Heart right ventricle (tissue), 16 donors: ENCODE measurements at regions of chr6 and their contacts with region 1.

Region 1: DNA sequence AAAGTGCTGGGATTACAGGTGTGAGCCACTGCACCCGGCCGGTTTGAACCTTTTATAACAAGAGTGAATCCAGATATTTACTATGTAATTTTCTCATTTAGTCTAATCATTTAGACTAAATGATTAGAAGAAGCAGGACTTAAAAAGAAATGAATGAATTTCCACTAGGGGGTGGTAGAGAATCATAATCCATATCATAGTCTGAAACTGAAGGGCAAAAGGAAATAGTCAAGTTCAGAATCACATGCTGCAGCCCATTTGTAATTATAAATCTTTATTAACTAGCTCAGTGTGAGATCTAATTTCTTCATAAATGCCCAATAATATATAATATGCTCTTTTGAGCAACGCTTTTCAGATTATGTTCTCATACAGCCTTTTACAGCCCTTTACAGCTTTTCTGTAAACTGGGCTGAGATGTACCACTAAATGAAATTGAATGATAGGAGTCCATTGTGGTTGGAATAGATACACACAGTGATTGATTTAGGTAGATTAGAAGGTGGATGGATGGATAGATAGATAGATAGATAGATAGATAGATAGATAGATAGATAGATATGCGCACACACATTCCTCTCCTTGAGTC is 31.8 kb downstream of the PSMB9 start:
- DNase-seq: no peak
- ATAC-seq: peak in 6 of 8 donors; percentile 31 to 76 (median 66)
- H3K4me3 ChIP-seq: no peak overlapping the region
- H3K27ac ChIP-seq: no peak overlapping the region
- H3K4me1 ChIP-seq: peaks cover 0 to 27% (median 0%) of the 10 kb centered on the region in 9 donors
- H3K27me3 ChIP-seq: no peaks in the 10 kb centered on the region
- CTCF ChIP-seq: peak; percentile 50 to 81 (median 68)

Region 2: DNA sequence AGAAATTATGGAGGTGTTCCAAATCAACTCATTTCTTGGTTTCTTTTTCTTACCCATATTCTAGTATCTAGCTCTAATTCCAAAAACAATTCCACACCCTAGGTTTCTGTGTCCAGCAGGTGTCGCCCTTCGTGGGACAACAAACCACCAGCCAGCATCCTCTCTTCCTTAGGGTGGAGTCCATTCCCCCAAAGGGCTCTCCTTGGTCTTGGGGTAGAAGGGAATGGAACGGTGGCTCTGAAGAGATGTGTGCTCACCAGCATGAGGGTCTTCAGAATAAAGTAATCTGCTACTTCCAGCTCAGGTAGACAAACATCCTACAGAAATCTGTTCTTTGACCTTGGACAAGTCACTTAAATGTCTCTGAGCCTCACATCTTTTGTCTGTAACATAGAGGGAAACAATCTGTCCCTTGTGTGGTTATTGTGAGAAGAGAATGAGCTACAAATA is 47.9 kb after region 1 on chr6:
- intact Hi-C with region 1: loop called in 8 of 10 experiments (anchors 2 to 10 kb)
- DNase-seq: peak; percentile 72 to 83
- ATAC-seq: peak; percentile 50 to 77 (median 68)
- H3K4me3 ChIP-seq: no peak overlapping the region
- H3K27ac ChIP-seq: peak overlapping the region in 1 of 10 donors; percentile 5
- H3K4me1 ChIP-seq: peaks cover 0 to 46% (median 0%) of the 10 kb centered on the region in 9 donors
- H3K27me3 ChIP-seq: no peaks in the 10 kb centered on the region
- CTCF ChIP-seq: peak; percentile 72 to 92 (median 82)

Region 3: DNA sequence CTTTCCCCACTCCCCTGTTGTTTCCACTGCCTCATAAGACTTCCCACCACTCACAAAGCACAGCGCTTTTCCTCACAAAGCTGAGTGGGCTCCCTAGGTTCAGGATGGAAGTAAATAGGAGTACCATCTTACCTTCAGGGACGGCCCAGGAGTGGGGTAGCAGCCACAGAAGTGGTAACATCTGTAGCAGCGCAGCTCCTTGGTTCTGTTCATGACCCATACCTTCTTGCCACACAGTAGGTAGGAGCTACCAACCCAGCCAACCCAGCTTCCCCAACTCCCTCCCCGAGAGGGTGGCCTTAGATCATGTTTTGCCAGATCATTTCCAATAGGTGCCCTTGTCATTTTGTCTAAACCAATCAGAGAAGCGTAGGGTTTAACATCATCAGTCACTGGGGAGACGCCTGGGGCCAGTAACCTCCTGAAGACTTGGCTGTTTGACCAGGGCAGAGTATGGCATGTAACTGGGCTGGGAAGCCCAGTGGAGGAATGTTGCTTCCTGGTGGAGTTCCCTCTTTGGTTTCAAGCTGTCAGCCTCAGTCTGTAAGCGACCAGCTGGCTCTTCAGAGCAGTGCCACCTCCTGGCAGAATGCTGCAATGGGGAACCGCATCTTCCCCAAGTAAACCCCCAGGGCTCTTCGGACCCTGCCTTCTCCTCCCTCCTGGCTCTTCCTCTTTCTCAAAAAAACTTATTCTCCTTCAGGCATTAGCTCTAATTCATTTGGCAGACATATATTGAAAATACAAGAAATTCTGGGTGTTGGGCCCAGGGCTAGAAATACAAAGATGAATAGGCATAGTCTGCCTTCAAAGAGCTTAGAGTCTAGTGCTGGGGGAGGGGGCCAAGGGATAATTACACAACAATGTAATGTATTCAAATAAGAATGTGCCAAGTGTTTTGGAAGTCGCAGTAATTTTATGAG is 67.3 kb after region 1 on chr6 and contains the start of gene HLA-DMA:
- intact Hi-C with region 1: loop called in 1 of 10 experiments (anchors 5 kb)
- DNase-seq: peak; percentile 70 to 92
- ATAC-seq: peak; percentile 98 to 100 (median 99)
- H3K4me3 ChIP-seq: peak within 1 kb of the TSS in 9 of 10 donors; percentile 19 to 55 (median 44)
- H3K27ac ChIP-seq: peak within 1 kb of the TSS in 9 of 10 donors; percentile 61 to 90 (median 74)
- H3K4me1 ChIP-seq: peaks cover 0 to 61% (median 16%) of the 10 kb centered on the region in 9 donors
- H3K27me3 ChIP-seq: no peaks in the 10 kb centered on the region
- CTCF ChIP-seq: peak; percentile 71 to 91 (median 84)
- total RNA-seq, gene HLA-DMA: 7.8 to 106 (median 14.5) TPM

Region 4: DNA sequence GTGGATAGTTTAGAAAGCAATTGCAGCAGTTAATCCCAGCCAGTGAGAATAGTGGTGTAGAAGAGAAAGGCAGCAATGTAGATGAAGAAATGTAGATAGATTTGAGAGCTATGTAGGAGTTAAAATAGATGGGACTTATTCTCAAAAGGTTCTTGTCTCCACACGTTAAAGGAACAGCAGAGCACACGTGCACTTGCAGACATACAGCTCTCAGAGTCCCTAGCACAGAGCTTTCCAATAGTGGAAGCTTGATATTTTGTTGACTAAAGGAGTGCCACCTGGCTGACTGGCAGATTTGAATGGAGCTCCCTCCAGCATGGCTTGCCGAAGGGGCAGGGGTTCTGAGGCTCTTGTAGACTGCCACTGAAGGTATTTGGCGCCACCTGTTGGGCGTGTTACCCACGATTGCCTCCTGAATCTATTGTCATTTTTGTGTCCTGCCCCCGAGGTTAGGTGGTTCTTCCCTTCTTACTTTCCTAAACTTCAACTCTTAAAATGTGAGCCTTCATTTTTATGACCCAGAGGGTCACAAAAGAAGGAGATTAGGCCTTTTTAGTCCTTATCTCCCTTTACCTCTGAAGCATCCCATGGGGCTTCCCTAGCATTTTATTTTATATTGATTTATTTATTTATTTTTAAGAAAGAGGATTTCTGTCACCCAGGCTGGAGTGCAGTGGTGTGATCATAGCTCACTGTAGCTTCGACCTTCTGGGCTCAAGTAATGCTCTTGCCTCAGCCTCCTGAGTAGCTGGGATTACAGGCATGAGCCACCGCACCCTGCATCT is 99.0 kb after region 1 on chr6:
- intact Hi-C with region 1: loop called (anchors 1 to 5 kb)
- DNase-seq: peak; percentile 82 to 90
- ATAC-seq: peak; percentile 75 to 90 (median 84)
- H3K4me3 ChIP-seq: no peak overlapping the region
- H3K27ac ChIP-seq: no peak overlapping the region
- H3K4me1 ChIP-seq: peaks cover 0 to 24% (median 4%) of the 10 kb centered on the region in 9 donors
- H3K27me3 ChIP-seq: no peaks in the 10 kb centered on the region
- CTCF ChIP-seq: peak; percentile 70 to 96 (median 92)

Region 5: DNA sequence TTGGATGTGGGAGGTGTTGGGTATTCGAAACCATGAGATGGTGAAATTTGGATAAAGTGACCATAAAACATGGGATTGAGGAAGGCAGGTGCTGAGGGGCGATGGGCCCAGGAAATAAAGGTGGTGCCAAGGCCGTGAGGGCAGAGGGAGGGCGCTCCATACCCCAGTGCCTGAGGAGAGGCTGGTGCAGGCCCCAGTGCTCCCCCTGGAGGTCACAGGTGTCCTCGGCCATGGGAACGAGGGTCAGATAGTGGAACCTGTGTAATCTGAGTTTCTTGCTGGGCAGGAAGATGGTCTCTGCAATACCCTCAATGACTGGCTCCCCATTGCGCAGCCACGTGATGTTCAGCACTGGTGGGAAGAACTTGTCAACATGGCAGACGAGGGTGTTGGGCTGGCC is 206.2 kb after region 1 on chr6:
- intact Hi-C with region 1: loop called in 1 of 10 experiments (anchors 5 kb)
- DNase-seq: peak in 1 of 2 donors; percentile 43
- ATAC-seq: peak in 5 of 8 donors; percentile 51 to 74 (median 55)
- H3K4me3 ChIP-seq: no peak overlapping the region
- H3K27ac ChIP-seq: no peak overlapping the region
- H3K4me1 ChIP-seq: no peaks in the 10 kb centered on the region
- H3K27me3 ChIP-seq: peaks cover 0 to 13% (median 0%) of the 10 kb centered on the region in 7 donors
- CTCF ChIP-seq: peak in 8 of 9 donors; percentile 19 to 73 (median 61)